SK-N-SH (cell line): ENCODE measurements at regions of chr7 and their contacts with region 1.

Region 1: GRCh38 chr7:4103352-4104091 is 578.6 kb upstream of the FOXK1 start:
- DNase-seq: peak; percentile 62
- H3K4me3 ChIP-seq: no peak overlapping the region
- H3K27ac ChIP-seq: no peak overlapping the region
- H3K4me1 ChIP-seq: peaks cover 0 to 6% of the 10 kb centered on the region in 2 experiments; a peak in 1 of 4 replicates
- H3K27me3 ChIP-seq: no peaks in the 10 kb centered on the region
- CTCF ChIP-seq: no peak; the same call in 1 of the 2 replicates
- EP300 ChIP-seq: no peak
- RAD21 ChIP-seq: peak; percentile 57

Region 2: GRCh38 chr7:4115941-4116610 is 12.6 kb after region 1 on chr7:
- CTCF ChIA-PET with region 1: interaction called, 10 read pairs
- POLR2A ChIA-PET with region 1: no interaction called
- DNase-seq: no peak
- H3K4me3 ChIP-seq: no peak overlapping the region
- H3K27ac ChIP-seq: no peak overlapping the region
- H3K4me1 ChIP-seq: no peaks in the 10 kb centered on the region
- H3K27me3 ChIP-seq: no peaks in the 10 kb centered on the region
- CTCF ChIP-seq: no peak
- EP300 ChIP-seq: no peak
- RAD21 ChIP-seq: no peak

Region 3: DNA sequence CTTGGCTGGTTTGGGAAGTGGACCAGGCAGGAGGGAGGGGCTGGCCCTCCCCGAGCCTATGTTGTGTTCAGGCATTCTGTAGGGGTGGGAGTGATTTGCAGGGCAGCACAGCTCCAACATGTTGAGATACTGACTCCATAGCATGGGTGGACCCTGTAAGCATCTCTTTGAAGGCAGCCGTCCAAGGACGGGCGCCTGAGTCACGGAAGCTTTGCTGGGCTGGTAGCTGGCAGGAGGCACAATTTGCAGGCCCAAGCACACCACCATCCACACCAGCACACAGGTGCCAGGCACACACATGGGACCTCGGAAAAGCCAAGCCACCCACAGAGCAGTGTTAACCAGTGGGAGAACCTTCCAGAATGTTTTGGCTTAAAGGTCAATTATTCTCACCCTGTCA is 73.5 kb after region 1 on chr7:
- CTCF ChIA-PET with region 1: no interaction called
- POLR2A ChIA-PET with region 1: no interaction called
- DNase-seq: no peak
- H3K4me3 ChIP-seq: no peak overlapping the region
- H3K27ac ChIP-seq: no peak overlapping the region
- H3K4me1 ChIP-seq: no peaks in the 10 kb centered on the region; a peak in 1 of 4 replicates
- H3K27me3 ChIP-seq: no peaks in the 10 kb centered on the region
- CTCF ChIP-seq: no peak
- EP300 ChIP-seq: no peak
- RAD21 ChIP-seq: no peak